CD8-positive, alpha-beta T cell (primary cell): ENCODE measurements at regions of chr12 and their contacts with region 1.

Region 1: GRCh38 chr12:54526812-54527630 is 22.4 kb upstream of the PDE1B start:
- DNase-seq: peak in 6 of 9 experiments; percentile 13 to 52 (median 29)
- ATAC-seq: no peak
- H3K4me3 ChIP-seq: no peak overlapping the region
- H3K4me3 Mint-ChIP-seq: no peak overlapping the region
- H3K27ac ChIP-seq: no peak overlapping the region
- H3K27ac Mint-ChIP-seq: peak overlapping the region; percentile 11
- H3K4me1 ChIP-seq: no peaks in the 10 kb centered on the region
- H3K4me1 Mint-ChIP-seq: no peaks in the 10 kb centered on the region
- H3K27me3 ChIP-seq: no peaks in the 10 kb centered on the region
- H3K27me3 Mint-ChIP-seq: no peaks in the 10 kb centered on the region
- CTCF ChIP-seq: peak; percentile 70

Region 2: DNA sequence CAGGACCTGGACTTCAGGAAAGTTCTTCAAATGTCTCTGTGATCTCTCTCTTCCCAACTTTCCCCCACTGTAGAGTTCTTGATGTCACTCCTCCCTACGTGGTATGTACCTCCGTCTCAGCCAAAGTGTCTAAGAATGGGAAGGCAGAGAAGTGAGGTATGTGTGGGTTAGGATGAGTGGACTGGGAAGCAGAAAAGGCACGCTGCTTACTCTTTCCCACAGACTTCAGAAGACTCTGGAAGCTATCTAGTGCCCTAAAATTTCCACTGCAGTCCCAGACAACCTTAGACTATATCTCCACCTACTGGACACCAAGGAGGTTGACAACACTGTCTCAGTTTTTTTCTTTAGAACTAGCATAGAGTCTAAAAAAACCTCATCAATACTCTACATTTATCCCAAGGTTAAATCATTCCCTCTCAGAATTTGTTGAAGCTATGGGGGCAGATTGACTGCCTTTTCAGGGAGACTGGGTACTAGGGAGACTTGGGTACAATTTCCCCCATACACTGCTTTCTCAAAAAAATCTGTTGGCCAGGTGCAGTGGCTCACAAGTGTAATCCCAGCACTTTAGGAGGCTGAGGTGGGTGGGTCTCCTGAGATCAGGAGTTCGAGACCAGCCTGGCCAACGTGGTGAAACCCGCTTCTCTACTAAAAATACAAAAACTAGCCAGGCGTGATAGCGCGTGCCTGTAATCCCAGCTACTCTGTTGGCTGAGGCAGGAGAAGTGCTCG is 87.3 kb before region 1 on chr12:
- CTCF ChIA-PET with region 1: no interaction called
- POLR2A ChIA-PET with region 1: no interaction called
- intact Hi-C with region 1: no loop called
- DNase-seq: peak in 2 of 9 experiments; percentile 65 to 76
- ATAC-seq: peak; percentile 90
- H3K4me3 ChIP-seq: no peak overlapping the region
- H3K4me3 Mint-ChIP-seq: no peak overlapping the region
- H3K27ac ChIP-seq: no peak overlapping the region
- H3K27ac Mint-ChIP-seq: no peak overlapping the region
- H3K4me1 ChIP-seq: no peaks in the 10 kb centered on the region
- H3K4me1 Mint-ChIP-seq: peaks cover 9% of the 10 kb centered on the region
- H3K27me3 ChIP-seq: peaks cover 0 to 3% of the 10 kb centered on the region in 2 experiments
- H3K27me3 Mint-ChIP-seq: peaks cover 2% of the 10 kb centered on the region
- CTCF ChIP-seq: peak; percentile 82

Region 3: DNA sequence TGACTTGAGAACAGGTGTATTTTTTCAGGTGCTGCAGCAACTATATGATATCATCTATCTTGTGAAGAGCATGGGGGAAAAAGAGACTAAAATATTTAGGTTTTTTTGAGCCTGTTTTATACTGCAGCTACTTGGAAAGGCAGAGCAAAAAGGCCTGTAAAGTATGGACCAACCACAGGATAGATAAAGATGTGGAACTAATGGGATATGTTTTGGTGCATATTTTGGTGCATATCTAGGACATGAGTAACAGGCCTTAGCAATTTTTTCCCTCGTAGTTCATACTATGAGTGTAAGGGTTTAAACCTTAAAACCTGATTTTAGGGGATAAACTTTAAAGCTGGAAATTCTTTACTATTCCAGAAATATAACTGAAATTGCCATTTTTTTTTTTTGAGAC is 47.6 kb before region 1 on chr12:
- CTCF ChIA-PET with region 1: no interaction called
- POLR2A ChIA-PET with region 1: no interaction called
- intact Hi-C with region 1: no loop called
- DNase-seq: no peak
- ATAC-seq: no peak
- H3K4me3 ChIP-seq: no peak overlapping the region
- H3K4me3 Mint-ChIP-seq: no peak overlapping the region
- H3K27ac ChIP-seq: no peak overlapping the region
- H3K27ac Mint-ChIP-seq: no peak overlapping the region
- H3K4me1 ChIP-seq: no peaks in the 10 kb centered on the region
- H3K4me1 Mint-ChIP-seq: no peaks in the 10 kb centered on the region
- H3K27me3 ChIP-seq: no peaks in the 10 kb centered on the region
- H3K27me3 Mint-ChIP-seq: peaks cover 2% of the 10 kb centered on the region
- CTCF ChIP-seq: no peak

Region 4: GRCh38 chr12:54538136-54538700 is 11.2 kb after region 1 on chr12:
- CTCF ChIA-PET with region 1: interaction called, 10 read pairs
- POLR2A ChIA-PET with region 1: interaction called, 3 read pairs
- intact Hi-C with region 1: no loop called
- DNase-seq: no peak
- ATAC-seq: no peak
- H3K4me3 ChIP-seq: no peak overlapping the region
- H3K4me3 Mint-ChIP-seq: no peak overlapping the region
- H3K27ac ChIP-seq: no peak overlapping the region
- H3K27ac Mint-ChIP-seq: peak overlapping the region; percentile 79
- H3K4me1 ChIP-seq: no peaks in the 10 kb centered on the region
- H3K4me1 Mint-ChIP-seq: no peaks in the 10 kb centered on the region
- H3K27me3 ChIP-seq: no peaks in the 10 kb centered on the region
- H3K27me3 Mint-ChIP-seq: no peaks in the 10 kb centered on the region
- CTCF ChIP-seq: no peak